ENCODE measurements at regions of chr5 and their contacts with region 1.

Region 1: DNA sequence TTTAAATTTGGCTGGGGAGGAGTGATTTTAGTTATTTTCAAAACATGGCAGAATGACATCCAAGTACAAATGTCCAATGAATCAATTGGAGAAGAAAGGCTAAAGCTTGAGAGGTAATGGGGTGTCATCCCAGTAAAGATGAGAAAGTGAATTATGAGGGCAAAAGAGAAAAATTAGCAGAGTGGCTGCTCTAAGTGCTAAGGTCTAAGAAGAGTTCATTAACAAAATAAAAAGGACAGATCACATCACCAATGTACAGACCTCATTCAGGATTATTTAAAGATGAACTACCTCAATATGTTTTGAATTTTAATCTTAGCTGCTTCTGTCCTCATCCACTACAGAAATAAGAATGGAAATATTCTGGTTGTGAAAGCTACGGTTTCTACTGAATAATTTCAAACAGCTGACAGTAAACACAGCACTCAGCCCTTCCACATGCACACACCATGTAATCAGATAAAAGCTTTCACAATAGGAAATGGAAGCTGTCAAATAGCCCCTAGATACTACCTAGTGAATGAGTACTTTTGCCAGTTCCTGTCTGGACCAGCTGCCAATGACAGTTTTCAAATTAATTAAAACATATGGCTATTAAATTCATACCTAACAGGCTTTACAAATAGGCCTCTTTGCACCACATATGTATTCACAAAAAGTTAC is 171.5 kb downstream of the SSBP2 start:
- DNase-seq: no peak
- ATAC-seq: no peak
- H3K4me3 ChIP-seq: no peak overlapping the region
- H3K4me3 Mint-ChIP-seq: no peak overlapping the region
- H3K27ac ChIP-seq: no peak overlapping the region
- H3K27ac Mint-ChIP-seq: no peak overlapping the region
- H3K4me1 ChIP-seq: no peaks in the 10 kb centered on the region
- H3K4me1 Mint-ChIP-seq: peaks cover 5% of the 10 kb centered on the region
- H3K27me3 ChIP-seq: no peaks in the 10 kb centered on the region
- H3K27me3 Mint-ChIP-seq: no peaks in the 10 kb centered on the region
- CTCF ChIP-seq: no peak

Region 2: GRCh38 chr5:81665795-81666194 is 86.4 kb after region 1 on chr5:
- CTCF ChIA-PET with region 1: no interaction called
- POLR2A ChIA-PET with region 1: no interaction called
- intact Hi-C with region 1: no loop called
- DNase-seq: no peak
- ATAC-seq: no peak
- H3K4me3 ChIP-seq: no peak overlapping the region
- H3K4me3 Mint-ChIP-seq: no peak overlapping the region
- H3K27ac ChIP-seq: no peak overlapping the region
- H3K27ac Mint-ChIP-seq: no peak overlapping the region
- H3K4me1 ChIP-seq: peaks cover 0 to 2% of the 10 kb centered on the region in 2 donors
- H3K4me1 Mint-ChIP-seq: peaks cover 30% of the 10 kb centered on the region
- H3K27me3 ChIP-seq: no peaks in the 10 kb centered on the region
- H3K27me3 Mint-ChIP-seq: no peaks in the 10 kb centered on the region
- CTCF ChIP-seq: no peak

Region 3: DNA sequence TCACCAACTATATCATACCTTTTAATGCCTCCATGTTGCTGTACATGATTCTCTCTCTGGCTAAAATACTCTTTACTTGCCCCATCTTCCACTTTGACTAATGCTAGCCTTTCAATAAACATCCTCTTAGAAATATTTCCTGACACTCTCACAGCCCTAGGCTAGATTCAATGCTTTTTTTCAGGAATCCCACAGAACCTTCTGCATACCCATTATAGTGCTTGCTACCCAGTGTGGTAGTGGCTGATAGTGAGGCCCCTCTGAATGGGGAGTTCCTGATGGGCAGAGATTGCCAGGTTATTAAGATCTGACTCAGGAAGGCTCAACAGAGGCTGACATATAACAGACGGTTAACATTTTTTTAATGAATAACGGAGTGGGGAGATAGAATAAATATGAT is 159.9 kb after region 1 on chr5:
- CTCF ChIA-PET with region 1: no interaction called
- POLR2A ChIA-PET with region 1: no interaction called
- intact Hi-C with region 1: loop called (anchors 10 kb)
- DNase-seq: no peak
- ATAC-seq: no peak
- H3K4me3 ChIP-seq: no peak overlapping the region
- H3K4me3 Mint-ChIP-seq: no peak overlapping the region
- H3K27ac ChIP-seq: no peak overlapping the region
- H3K27ac Mint-ChIP-seq: no peak overlapping the region
- H3K4me1 ChIP-seq: peaks cover 0 to 4% of the 10 kb centered on the region in 2 donors
- H3K4me1 Mint-ChIP-seq: peaks cover 48% of the 10 kb centered on the region
- H3K27me3 ChIP-seq: no peaks in the 10 kb centered on the region
- H3K27me3 Mint-ChIP-seq: no peaks in the 10 kb centered on the region
- CTCF ChIP-seq: no peak

Measured in B cell (primary cell).